Astrocyte of the cerebellum (primary cell): ENCODE measurements at regions of chr3 and their contacts with region 1.

Region 1: GRCh38 chr3:10164546-10165393 is at the start of gene IRAK2:
- DNase-seq: no peak
- H3K4me3 ChIP-seq: peak within 1 kb of the TSS; percentile 86
- CTCF ChIP-seq: peak; percentile 63

Region 2: GRCh38 chr3:10122724-10123123 is 42.0 kb before region 1 on chr3:
- in situ Hi-C with region 1: loop called (anchors 5 kb)
- DNase-seq: no peak
- H3K4me3 ChIP-seq: no peak overlapping the region
- CTCF ChIP-seq: no peak

Region 3: DNA sequence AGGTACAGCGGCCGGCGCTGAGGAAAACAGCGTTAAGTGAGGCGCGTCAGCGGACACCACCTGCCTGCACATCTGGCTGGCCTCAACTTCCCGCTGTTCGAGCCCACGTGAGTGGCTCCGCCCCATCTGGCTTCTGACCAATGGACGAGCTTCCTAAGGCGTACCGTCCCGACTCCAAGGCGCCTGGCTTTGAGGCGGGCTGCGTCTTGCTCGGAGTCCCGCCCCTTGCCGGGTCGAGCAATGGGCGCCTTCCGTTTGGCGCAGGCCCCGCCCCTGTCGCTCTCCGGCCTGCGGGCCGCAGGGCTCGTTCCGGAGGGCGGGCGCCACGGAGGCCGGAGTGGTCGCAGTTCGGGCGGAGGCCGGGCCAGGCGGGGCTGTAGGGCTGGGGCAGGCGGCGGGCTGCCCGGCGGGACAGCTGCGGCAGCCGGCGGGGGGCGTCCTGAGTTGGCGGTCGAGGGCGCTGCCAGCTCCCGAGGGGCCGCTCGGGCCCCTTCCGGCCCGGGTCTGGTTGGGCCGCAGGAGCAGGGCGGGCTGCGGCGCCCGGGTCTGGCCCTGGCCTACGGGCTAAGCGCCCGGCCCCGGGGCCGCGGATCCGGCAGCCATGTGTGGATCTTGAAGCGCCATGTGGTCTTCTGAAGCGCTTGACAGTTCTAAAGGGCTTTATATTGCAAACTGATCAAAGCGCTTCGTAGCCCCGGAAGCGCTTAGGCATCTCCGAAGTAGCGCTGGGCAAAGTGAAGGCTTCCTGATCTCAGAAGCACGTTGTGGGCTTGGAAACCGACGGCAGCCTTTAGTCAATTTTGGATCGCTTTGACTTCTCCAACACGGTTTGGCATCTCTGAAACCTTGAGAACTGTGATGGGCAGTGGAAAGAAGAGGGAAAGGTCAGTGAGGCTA is 83.7 kb after region 1 on chr3 and contains the start of gene TATDN2:
- in situ Hi-C with region 1: loop called (anchors 5 kb)
- DNase-seq: peak; percentile 87
- H3K4me3 ChIP-seq: peak within 1 kb of the TSS; percentile 57
- CTCF ChIP-seq: no peak